K562 (cell line): ENCODE measurements at regions of chr19 and their contacts with region 1.

Region 1: DNA sequence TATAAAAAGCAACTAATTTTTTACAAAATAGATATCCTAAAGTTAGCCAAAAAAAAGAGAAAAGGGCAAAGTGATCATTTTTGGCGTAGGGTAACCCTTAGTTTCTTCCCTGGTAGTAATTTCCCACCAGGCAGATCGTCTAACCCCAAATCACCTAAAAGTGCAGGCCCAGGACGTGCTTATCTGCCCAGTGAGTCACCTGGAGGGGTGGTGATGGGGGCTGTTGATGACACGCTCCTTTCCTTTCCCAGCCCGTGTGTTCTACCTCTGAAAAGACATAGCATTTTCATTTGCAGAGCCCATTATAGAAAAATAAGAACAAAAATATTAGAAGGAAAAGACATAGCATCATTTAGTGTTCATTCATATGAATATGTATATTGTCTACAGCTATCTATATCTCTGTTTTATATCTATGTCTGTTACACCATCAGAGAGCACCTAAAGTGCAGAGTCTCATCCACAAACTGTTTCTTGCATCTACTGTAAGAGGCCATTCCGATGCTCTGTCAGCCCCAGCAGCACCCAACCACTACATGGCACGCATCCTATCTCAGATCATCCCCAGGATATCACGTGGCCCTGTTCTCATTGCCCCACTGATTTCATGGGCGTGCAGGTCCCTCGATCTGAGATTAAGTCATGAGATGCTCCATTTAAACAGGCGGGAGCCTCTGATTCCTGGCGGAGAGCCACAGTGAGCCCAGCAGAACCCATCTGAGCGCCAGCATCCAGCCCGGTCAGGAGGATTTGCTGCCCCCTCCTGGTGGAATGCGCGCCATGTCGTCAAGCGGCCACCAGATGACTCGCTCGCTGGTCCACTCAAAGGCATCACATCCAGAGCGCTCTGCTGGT is 8.5 kb upstream of the LILRB3 start:
- DNase-seq: peak; percentile 82 to 92 (median 89)
- ATAC-seq: peak; percentile 100
- H3K4me3 ChIP-seq: no peak overlapping the region
- H3K27ac ChIP-seq: no peak overlapping the region
- H3K4me1 ChIP-seq: peaks cover 4 to 6% of the 10 kb centered on the region in 2 experiments; a peak in 4 of 5 replicates
- H3K27me3 ChIP-seq: peaks cover 10 to 33% of the 10 kb centered on the region in 2 experiments; a peak in 4 of 5 replicates
- CTCF ChIP-seq: peak; percentile 98 to 99 (median 99)
- EP300 ChIP-seq: peak; percentile 38; the same call in 1 of the 2 replicates
- POLR2A ChIP-seq: no peak
- RAD21 ChIP-seq: peak; percentile 93 to 98

Region 2: GRCh38 chr19:54159352-54160181 is 71.7 kb before region 1 on chr19 and contains the start of gene LENG1:
- CTCF ChIA-PET with region 1: no interaction called
- POLR2A ChIA-PET with region 1: no interaction called
- in situ Hi-C with region 1: loop called (anchors 5 kb)
- intact Hi-C with region 1: no loop called
- DNase-seq: peak; percentile 95 to 100 (median 98)
- ATAC-seq: peak; percentile 89
- H3K4me3 ChIP-seq: peak within 1 kb of the TSS; percentile 69
- H3K27ac ChIP-seq: peak within 1 kb of the TSS; percentile 93
- H3K4me1 ChIP-seq: peaks cover 21 to 42% of the 10 kb centered on the region in 2 experiments
- H3K27me3 ChIP-seq: no peaks in the 10 kb centered on the region
- CTCF ChIP-seq: peak; percentile 40 to 52 (median 45)
- EP300 ChIP-seq: no peak
- POLR2A ChIP-seq: peak; percentile 89
- RAD21 ChIP-seq: no peak
- polyA plus RNA-seq, gene LENG1: 0.30 to 0.77 TPM

Region 3: GRCh38 chr19:54168174-54168917 is 63.0 kb before region 1 on chr19:
- CTCF ChIA-PET with region 1: interaction called, 37 read pairs
- POLR2A ChIA-PET with region 1: no interaction called
- in situ Hi-C with region 1: loop called (anchors 5 kb)
- intact Hi-C with region 1: loop called (anchors 2 kb)
- DNase-seq: peak; percentile 86 to 94 (median 86)
- ATAC-seq: peak; percentile 89
- H3K4me3 ChIP-seq: no peak overlapping the region
- H3K27ac ChIP-seq: no peak overlapping the region
- H3K4me1 ChIP-seq: peaks cover 2 to 50% of the 10 kb centered on the region in 2 experiments; a peak in 2 of 5 replicates
- H3K27me3 ChIP-seq: no peaks in the 10 kb centered on the region
- CTCF ChIP-seq: peak; percentile 83 to 94 (median 88)
- EP300 ChIP-seq: no peak
- POLR2A ChIP-seq: no peak
- RAD21 ChIP-seq: peak; percentile 56 to 83

Region 4: GRCh38 chr19:54209811-54210494 is 21.4 kb before region 1 on chr19:
- CTCF ChIA-PET with region 1: no interaction called
- POLR2A ChIA-PET with region 1: interaction called, 5 read pairs
- in situ Hi-C with region 1: no loop called
- intact Hi-C with region 1: loop called (anchors 2 kb)
- DNase-seq: peak; percentile 66 to 96 (median 74)
- ATAC-seq: peak; percentile 63
- H3K4me3 ChIP-seq: no peak overlapping the region
- H3K27ac ChIP-seq: peak overlapping the region; percentile 89
- H3K4me1 ChIP-seq: peaks cover 65 to 76% of the 10 kb centered on the region in 2 experiments
- H3K27me3 ChIP-seq: no peaks in the 10 kb centered on the region
- CTCF ChIP-seq: no peak
- EP300 ChIP-seq: peak; percentile 84
- POLR2A ChIP-seq: no peak
- RAD21 ChIP-seq: no peak; a peak in 1 of 4 replicates

Region 5: GRCh38 chr19:54218960-54219661 is 12.2 kb before region 1 on chr19:
- CTCF ChIA-PET with region 1: no interaction called
- POLR2A ChIA-PET with region 1: interaction called, 6 read pairs
- in situ Hi-C with region 1: no loop called
- intact Hi-C with region 1: loop called (anchors 2 kb)
- DNase-seq: no peak
- ATAC-seq: no peak
- H3K4me3 ChIP-seq: no peak overlapping the region
- H3K27ac ChIP-seq: no peak overlapping the region
- H3K4me1 ChIP-seq: peaks cover 0 to 24% of the 10 kb centered on the region in 2 experiments; a peak in 3 of 5 replicates
- H3K27me3 ChIP-seq: no peaks in the 10 kb centered on the region; a peak in 1 of 5 replicates
- CTCF ChIP-seq: no peak
- EP300 ChIP-seq: no peak
- POLR2A ChIP-seq: no peak
- RAD21 ChIP-seq: no peak